CD4-positive, alpha-beta T cell (primary cell): ENCODE measurements at regions of chr1 and their contacts with region 1.

Region 1: GRCh38 chr1:181033799-181034451 is at the start of gene MR1:
- DNase-seq: peak in 8 of 14 experiments; percentile 19 to 92 (median 42)
- ATAC-seq: peak; percentile 97
- H3K4me3 ChIP-seq: peak within 1 kb of the TSS; percentile 78
- H3K4me3 Mint-ChIP-seq: peak within 1 kb of the TSS; percentile 97
- H3K27ac ChIP-seq: peak within 1 kb of the TSS; percentile 87 to 97
- H3K27ac Mint-ChIP-seq: peak within 1 kb of the TSS; percentile 92
- H3K4me1 ChIP-seq: peaks cover 47% of the 10 kb centered on the region
- H3K4me1 Mint-ChIP-seq: peaks cover 64% of the 10 kb centered on the region
- H3K27me3 ChIP-seq: no peaks in the 10 kb centered on the region
- H3K27me3 Mint-ChIP-seq: no peaks in the 10 kb centered on the region
- CTCF ChIP-seq: no peak
- total RNA-seq, gene MR1: 16.2 to 18.1 TPM

Region 2: GRCh38 chr1:181056560-181056959 is 22.6 kb after region 1 on chr1:
- CTCF ChIA-PET with region 1: interaction called, 11 read pairs
- POLR2A ChIA-PET with region 1: no interaction called
- intact Hi-C with region 1: no loop called
- DNase-seq: no peak
- ATAC-seq: no peak
- H3K4me3 ChIP-seq: no peak overlapping the region
- H3K4me3 Mint-ChIP-seq: no peak overlapping the region
- H3K27ac ChIP-seq: no peak overlapping the region
- H3K27ac Mint-ChIP-seq: no peak overlapping the region
- H3K4me1 ChIP-seq: no peaks in the 10 kb centered on the region
- H3K4me1 Mint-ChIP-seq: peaks cover 4% of the 10 kb centered on the region
- H3K27me3 ChIP-seq: no peaks in the 10 kb centered on the region
- H3K27me3 Mint-ChIP-seq: no peaks in the 10 kb centered on the region
- CTCF ChIP-seq: no peak

Region 3: DNA sequence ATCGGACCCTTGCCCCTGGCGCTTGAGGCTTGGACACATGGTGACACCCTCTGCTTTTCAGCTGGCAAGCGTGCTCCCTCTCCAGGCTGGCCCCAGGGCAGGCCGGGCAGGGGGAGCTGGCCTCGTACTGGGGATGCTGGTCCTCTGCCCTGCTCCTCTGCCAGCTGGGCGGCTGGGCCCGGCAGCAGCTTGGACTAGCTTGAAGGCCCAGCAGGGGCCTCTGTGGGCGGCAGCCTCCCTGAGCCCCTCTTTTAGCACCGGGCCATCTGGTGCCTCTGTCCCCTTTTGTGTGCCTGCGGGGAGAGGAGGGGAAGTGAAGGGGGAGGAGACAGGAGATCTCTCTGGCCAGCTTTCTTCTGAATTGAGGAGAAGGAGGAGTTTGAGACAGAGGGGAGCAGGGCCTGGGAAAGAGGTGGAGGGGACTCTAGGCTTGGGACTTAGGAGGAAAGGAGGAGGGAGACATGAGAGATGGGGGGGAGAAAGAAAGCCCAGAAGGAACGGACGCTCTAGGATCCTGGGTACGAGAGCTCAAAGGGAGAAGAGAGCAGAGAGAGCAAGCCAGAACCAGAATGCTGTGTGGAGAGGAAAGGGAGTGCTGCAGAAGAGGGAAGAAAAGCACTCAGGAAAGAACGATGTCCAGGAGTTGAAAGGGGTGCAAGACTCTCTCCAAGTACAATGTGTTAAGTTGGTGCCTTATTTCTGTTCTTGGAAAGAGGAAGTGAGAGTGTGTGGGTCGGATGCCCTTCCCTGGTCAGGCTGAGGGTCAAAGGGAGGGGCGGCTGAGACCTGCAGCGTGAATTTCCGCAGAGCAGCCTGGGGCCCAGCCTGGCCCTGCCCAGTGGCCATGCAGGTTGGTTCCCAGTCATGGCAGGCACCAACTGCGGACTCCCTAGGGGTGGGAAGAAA is 94.9 kb after region 1 on chr1:
- CTCF ChIA-PET with region 1: no interaction called
- POLR2A ChIA-PET with region 1: no interaction called
- intact Hi-C with region 1: no loop called
- DNase-seq: peak in 3 of 14 experiments; percentile 34 to 54 (median 48)
- ATAC-seq: no peak
- H3K4me3 ChIP-seq: no peak overlapping the region
- H3K4me3 Mint-ChIP-seq: no peak overlapping the region
- H3K27ac ChIP-seq: no peak overlapping the region
- H3K27ac Mint-ChIP-seq: no peak overlapping the region
- H3K4me1 ChIP-seq: peaks cover 1% of the 10 kb centered on the region
- H3K4me1 Mint-ChIP-seq: peaks cover 4% of the 10 kb centered on the region
- H3K27me3 ChIP-seq: no peaks in the 10 kb centered on the region
- H3K27me3 Mint-ChIP-seq: peaks cover 5% of the 10 kb centered on the region
- CTCF ChIP-seq: no peak